ENCODE measurements at regions of chr6 and their contacts with region 1.

Region 1: DNA sequence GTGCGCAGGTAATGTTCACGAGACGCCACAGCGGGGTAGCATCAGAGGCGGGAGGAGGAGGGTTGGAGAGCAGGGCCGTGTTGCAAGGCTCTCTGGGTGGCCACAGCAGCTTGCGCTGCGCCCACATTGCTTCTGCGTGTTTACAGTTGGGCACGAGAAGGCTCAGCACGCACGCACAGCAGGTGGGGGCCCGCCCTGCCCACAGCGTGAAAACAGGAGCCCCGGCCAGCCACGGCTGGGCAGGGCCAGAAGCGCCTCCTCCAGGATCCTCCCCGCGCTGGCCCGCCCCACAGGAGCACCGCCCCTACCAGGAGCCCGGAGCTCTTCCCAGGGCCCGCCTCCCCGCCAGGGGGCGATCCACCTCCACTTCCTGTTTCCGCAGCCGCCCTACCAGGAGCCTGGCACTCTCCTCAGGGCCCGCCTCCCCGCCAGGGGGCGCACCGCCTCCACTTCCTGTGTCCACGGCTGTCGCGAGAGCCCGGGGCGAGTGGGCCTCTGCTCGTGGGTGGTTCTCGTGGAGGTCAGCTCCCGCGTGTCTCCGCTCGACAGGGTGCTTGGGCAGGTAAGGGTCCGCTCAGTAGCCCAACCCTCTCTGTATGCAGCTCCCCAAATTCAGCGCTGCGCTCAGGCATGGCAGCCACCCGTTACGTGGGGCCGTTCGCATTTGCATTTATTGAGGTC is at the start of gene FAM50B:
- DNase-seq: peak; percentile 90 to 92 (median 91)
- H3K4me3 ChIP-seq: peak within 1 kb of the TSS in 1 of 2 donors; percentile 63
- H3K4me3 Mint-ChIP-seq: peak within 1 kb of the TSS; percentile 79 to 87 (median 85)
- H3K27ac ChIP-seq: peak within 1 kb of the TSS; percentile 45
- H3K27ac Mint-ChIP-seq: peak within 1 kb of the TSS; percentile 66 to 96 (median 92)
- H3K4me1 ChIP-seq: peaks cover 34% of the 10 kb centered on the region
- H3K4me1 Mint-ChIP-seq: peaks cover 21 to 46% (median 29%) of the 10 kb centered on the region in 4 donors
- H3K27me3 ChIP-seq: no peaks in the 10 kb centered on the region
- H3K27me3 Mint-ChIP-seq: no peaks in the 10 kb centered on the region
- total RNA-seq, gene FAM50B: 15.0 to 15.4 TPM

Region 2: GRCh38 chr6:3356056-3356761 is 492.9 kb before region 1 on chr6:
- CTCF ChIA-PET with region 1: no interaction called
- POLR2A ChIA-PET with region 1: interaction called, 4 read pairs
- intact Hi-C with region 1: loop called (anchors 10 kb)
- DNase-seq: peak; percentile 65 to 84 (median 78)
- H3K4me3 ChIP-seq: peak overlapping the region; percentile 14 to 59
- H3K4me3 Mint-ChIP-seq: peak overlapping the region; percentile 86 to 93 (median 88)
- H3K27ac ChIP-seq: peak overlapping the region; percentile 57
- H3K27ac Mint-ChIP-seq: peak overlapping the region; percentile 94 to 98 (median 97)
- H3K4me1 ChIP-seq: peaks cover 36% of the 10 kb centered on the region
- H3K4me1 Mint-ChIP-seq: peaks cover 33 to 58% (median 42%) of the 10 kb centered on the region in 4 donors
- H3K27me3 ChIP-seq: no peaks in the 10 kb centered on the region
- H3K27me3 Mint-ChIP-seq: peaks cover 1 to 4% of the 10 kb centered on the region in 2 donors

Region 3: GRCh38 chr6:3751730-3752542 is 97.1 kb before region 1 on chr6:
- CTCF ChIA-PET with region 1: interaction called, 14 read pairs
- POLR2A ChIA-PET with region 1: interaction called, 6 read pairs
- intact Hi-C with region 1: loop called (anchors 2 kb)
- DNase-seq: peak; percentile 46 to 78 (median 51)
- H3K4me3 ChIP-seq: peak overlapping the region in 1 of 2 donors; percentile 38
- H3K4me3 Mint-ChIP-seq: peak overlapping the region in 7 of 8 donors; percentile 21 to 73 (median 57)
- H3K27ac ChIP-seq: no peak overlapping the region
- H3K27ac Mint-ChIP-seq: no peak overlapping the region
- H3K4me1 ChIP-seq: peaks cover 11% of the 10 kb centered on the region
- H3K4me1 Mint-ChIP-seq: peaks cover 0 to 27% (median 3%) of the 10 kb centered on the region in 4 donors
- H3K27me3 ChIP-seq: no peaks in the 10 kb centered on the region
- H3K27me3 Mint-ChIP-seq: peaks cover 20 to 23% of the 10 kb centered on the region in 2 donors

Region 4: DNA sequence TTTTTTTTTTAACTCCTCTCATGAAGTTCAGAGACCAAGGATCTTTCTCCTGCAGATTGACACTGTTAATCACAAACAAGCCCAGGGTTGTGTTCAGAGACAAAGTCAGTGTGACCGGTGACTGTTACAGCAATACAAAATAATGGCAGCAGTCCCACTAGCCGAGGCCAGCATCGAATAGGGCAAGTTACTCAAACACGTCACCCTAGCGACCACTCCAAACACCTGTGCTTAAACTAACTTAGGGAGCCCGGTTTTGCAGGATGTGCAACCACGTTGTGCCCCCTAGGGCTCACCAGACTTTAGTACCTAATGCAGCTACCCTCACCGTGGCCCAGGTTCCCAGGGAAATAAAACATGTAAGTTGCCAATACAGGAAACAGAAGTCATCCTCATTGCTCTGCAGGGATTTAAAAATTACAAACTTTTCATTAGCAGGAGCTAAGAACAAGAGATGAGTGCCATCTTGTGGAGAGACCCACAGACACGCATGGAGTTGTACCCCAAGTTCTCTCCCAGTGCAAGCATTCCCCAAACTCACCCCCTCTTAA is 38.2 kb after region 1 on chr6:
- CTCF ChIA-PET with region 1: interaction called, 4 read pairs
- POLR2A ChIA-PET with region 1: interaction called, 3 read pairs
- intact Hi-C with region 1: loop called (anchors 5 kb)
- DNase-seq: peak in 2 of 5 donors; percentile 4 to 18
- H3K4me3 ChIP-seq: no peak overlapping the region
- H3K4me3 Mint-ChIP-seq: no peak overlapping the region
- H3K27ac ChIP-seq: no peak overlapping the region
- H3K27ac Mint-ChIP-seq: no peak overlapping the region
- H3K4me1 ChIP-seq: no peaks in the 10 kb centered on the region
- H3K4me1 Mint-ChIP-seq: peaks cover 0 to 3% (median 0%) of the 10 kb centered on the region in 4 donors
- H3K27me3 ChIP-seq: no peaks in the 10 kb centered on the region
- H3K27me3 Mint-ChIP-seq: no peaks in the 10 kb centered on the region

Region 5: DNA sequence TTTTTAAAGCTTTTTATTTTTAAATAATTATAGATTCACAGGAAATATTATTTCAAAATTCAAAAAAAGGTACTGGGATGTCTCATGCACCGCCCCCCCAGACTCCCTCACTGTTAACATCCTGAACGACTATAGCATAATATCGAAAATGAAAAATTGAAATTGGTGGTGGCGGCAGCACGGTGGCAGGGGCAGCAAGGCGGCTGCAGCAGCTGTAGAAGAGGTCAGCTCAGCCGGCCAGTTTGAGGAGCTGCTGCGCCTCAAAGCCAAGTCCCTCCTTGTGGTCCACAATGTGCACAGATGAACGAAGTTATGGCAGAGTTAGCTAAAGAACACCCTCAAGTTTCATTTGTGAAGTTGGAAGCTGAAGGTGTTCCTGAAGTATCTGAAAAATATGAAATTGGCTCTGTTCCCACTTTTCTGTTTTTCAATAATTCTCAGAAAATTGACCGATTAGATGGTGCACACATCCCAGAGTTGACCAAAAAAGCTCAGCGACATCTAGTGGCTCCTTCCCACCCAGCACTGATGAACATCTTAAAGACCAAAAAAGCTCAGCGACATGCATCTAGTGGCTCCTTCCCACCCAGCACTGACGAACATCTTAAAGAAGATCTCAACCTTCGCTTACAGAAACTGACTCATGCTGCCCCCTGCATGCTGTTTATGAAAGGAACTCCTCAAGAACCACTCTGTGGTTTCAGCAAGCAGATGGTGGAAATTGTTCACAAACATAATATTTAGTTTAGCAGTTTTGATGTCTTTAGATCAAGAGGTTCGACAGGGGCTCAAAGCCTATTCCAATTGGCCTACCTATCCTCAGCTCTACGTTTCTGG is 129.0 kb after region 1 on chr6:
- CTCF ChIA-PET with region 1: interaction called, 72 read pairs
- POLR2A ChIA-PET with region 1: interaction called, 11 read pairs
- intact Hi-C with region 1: loop called (anchors 1 kb)
- DNase-seq: peak; percentile 50 to 66 (median 56)
- H3K4me3 ChIP-seq: no peak overlapping the region
- H3K4me3 Mint-ChIP-seq: peak overlapping the region in 6 of 8 donors; percentile 49 to 76 (median 63)
- H3K27ac ChIP-seq: no peak overlapping the region
- H3K27ac Mint-ChIP-seq: peak overlapping the region in 2 of 7 donors; percentile 52 to 73
- H3K4me1 ChIP-seq: peaks cover 4% of the 10 kb centered on the region
- H3K4me1 Mint-ChIP-seq: peaks cover 7 to 12% (median 8%) of the 10 kb centered on the region in 4 donors
- H3K27me3 ChIP-seq: no peaks in the 10 kb centered on the region
- H3K27me3 Mint-ChIP-seq: peaks cover 0 to 3% of the 10 kb centered on the region in 2 donors

Region 6: DNA sequence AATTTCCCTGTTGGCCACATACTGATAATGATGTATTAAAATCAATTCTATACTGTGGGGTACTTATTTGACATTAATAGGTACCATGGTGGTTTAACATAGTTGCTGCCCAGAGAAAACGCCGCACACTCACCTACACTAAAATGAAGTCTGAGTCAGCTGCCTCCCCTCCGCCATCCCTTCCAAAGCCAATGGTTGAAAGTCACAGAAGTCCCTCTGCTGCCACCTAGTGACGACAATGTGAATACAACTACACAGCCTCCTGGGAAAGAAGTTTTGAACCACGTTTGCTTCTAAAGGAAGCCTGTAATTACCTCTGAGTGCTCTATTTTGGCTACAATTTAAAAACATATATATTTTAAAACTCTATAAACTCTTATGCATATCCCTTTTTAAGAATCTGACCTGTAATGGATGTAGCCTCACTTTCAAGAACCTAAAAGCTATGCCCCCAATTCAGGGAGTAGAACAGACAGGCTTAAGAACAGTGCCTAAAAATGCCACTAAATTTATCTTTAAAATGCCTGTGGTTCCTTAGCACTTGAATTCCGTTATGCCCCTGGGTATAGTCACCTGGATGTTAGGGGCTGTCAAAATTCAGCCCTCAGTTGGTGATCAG is 306.9 kb after region 1 on chr6:
- CTCF ChIA-PET with region 1: no interaction called
- POLR2A ChIA-PET with region 1: no interaction called
- intact Hi-C with region 1: loop called (anchors 1 kb)
- DNase-seq: peak; percentile 69 to 81 (median 73)
- H3K4me3 ChIP-seq: no peak overlapping the region
- H3K4me3 Mint-ChIP-seq: no peak overlapping the region
- H3K27ac ChIP-seq: no peak overlapping the region
- H3K27ac Mint-ChIP-seq: peak overlapping the region in 1 of 7 donors; percentile 25
- H3K4me1 ChIP-seq: no peaks in the 10 kb centered on the region
- H3K4me1 Mint-ChIP-seq: peaks cover 0 to 5% (median 2%) of the 10 kb centered on the region in 4 donors
- H3K27me3 ChIP-seq: no peaks in the 10 kb centered on the region
- H3K27me3 Mint-ChIP-seq: peaks cover 2 to 4% of the 10 kb centered on the region in 2 donors